Right ventricle myocardium superior (tissue), 1 donor: ENCODE measurements at regions of chr6 and their contacts with region 1.

Region 1: DNA sequence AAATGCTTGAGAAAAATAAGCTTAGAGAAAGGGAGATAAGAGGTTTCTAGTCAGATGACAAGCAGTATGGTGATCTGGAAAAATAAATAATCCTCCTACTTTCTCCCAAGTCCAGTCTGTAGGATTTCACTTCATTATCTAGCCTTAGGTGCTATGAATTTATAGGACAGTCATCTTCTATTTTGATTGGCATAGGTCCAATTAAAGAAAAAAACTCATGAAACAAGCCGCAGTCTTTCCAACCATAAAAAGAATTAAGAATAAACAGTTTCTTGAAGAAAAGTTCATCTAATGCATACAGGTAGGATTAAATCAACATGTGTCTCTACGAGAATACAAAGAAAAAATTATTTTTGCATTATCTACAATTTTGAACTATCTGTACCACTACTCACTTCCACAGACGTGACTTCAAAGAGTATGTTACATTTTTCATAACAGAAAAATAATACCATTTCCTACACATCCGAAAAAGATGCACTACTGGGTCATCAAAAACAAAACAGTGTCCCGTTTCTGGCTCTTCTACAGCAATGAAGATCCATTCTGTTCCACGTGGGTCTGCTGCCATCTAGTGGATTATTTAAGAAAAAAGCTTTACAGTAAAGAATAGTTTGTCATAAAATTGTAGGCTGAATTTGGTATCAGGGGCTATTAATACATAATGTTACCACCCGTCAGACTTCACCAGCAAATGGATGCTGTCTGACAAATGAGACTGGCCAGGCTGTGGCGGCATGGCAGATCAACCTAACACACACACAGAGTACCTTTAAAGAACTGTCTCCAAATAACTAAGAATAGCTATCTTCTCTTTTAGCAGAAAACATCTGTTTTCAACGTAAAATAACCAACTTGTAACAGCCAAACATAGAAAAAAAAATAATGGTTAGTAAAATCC is 28.9 kb downstream of the STX7 start:
- DNase-seq: no peak
- ATAC-seq: peak; percentile 92

Region 2: DNA sequence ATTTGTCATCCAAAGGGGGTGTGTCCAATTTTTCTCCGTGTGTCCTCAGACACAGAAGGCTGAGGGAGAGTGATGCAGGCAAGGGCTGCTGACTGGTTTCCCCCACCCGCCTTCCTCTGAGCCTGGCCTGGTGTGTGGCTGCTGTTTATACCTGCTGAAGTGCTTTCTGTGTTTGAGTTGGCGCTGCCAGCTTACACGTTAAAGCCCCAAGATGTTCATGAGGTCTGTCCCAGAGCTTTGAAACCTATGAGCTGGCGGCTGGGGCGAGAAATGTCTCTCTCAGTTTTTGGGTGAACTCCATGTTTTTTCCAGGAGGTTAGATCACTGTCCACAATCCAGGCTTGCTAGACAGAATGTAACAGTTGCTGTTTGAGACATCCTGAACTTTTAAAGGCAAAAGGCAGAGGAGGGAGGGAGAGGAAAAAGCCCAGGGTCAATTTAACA is 463.9 kb before region 1 on chr6:
- intact Hi-C with region 1: no loop called
- DNase-seq: peak; percentile 47
- ATAC-seq: peak; percentile 79

Region 3: GRCh38 chr6:132279592-132280139 is 204.4 kb before region 1 on chr6:
- intact Hi-C with region 1: loop called (anchors 5 kb)
- DNase-seq: peak; percentile 78
- ATAC-seq: peak; percentile 92

Region 4: GRCh38 chr6:132300323-132300949 is 183.6 kb before region 1 on chr6:
- intact Hi-C with region 1: loop called (anchors 5 kb)
- DNase-seq: no peak
- ATAC-seq: no peak

Region 5: DNA sequence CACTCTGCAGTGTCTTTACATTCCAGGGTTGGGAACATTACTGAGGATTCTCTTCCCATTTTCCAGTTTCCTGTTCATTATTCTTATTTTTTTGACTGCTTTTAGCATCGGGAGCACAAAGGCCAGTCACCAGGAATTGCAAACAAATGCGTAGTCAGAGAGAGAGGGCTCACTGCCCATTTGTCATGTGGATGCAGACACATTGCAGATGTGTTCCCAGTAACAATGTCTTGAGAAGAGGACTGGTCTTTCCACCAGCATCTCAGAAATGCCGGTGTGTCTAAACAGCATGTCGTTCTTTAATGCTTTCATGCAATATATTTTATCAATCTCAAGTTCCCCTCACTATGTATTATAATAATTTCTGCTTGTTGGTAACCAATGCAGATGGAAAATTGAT is 85.1 kb after region 1 on chr6:
- intact Hi-C with region 1: no loop called
- DNase-seq: no peak
- ATAC-seq: no peak

Region 6: GRCh38 chr6:133070410-133071043 is 586.5 kb after region 1 on chr6:
- intact Hi-C with region 1: no loop called
- DNase-seq: no peak
- ATAC-seq: no peak